ENCODE measurements at regions of chr19 and their contacts with region 1.

Region 1: DNA sequence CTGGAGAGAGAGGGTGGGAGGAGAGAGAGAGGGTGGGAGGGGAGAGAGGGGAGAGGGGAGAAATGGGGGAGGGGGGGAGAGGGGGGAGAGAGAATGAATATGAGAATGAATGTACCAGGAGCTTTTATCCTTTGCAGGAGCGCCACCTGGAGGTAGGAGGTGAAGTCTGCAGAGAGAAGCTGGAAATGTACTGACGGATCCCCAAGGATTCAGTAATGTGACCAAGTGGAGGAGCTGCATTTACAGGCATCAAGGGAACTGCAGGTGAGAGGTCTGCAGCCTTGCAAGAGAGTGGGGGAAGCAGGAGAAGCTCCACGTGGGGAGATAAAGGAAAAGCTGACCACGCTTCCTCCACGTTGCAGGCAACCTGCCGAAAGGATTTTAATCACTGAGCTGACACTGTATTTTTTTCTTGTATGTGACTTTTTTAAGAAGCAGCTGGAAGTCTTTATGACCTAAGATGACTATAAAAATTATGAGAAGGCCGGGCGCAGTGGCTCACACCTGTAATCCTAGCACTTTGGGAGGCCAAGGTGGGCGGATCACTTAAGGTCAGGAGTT is 33.7 kb downstream of the VSTM1 start:
- DNase-seq: no peak
- H3K4me3 ChIP-seq: no peak overlapping the region
- H3K27ac ChIP-seq: no peak overlapping the region
- H3K27me3 ChIP-seq: peaks cover 2% of the 10 kb centered on the region
- CTCF ChIP-seq: peak; percentile 69

Region 2: DNA sequence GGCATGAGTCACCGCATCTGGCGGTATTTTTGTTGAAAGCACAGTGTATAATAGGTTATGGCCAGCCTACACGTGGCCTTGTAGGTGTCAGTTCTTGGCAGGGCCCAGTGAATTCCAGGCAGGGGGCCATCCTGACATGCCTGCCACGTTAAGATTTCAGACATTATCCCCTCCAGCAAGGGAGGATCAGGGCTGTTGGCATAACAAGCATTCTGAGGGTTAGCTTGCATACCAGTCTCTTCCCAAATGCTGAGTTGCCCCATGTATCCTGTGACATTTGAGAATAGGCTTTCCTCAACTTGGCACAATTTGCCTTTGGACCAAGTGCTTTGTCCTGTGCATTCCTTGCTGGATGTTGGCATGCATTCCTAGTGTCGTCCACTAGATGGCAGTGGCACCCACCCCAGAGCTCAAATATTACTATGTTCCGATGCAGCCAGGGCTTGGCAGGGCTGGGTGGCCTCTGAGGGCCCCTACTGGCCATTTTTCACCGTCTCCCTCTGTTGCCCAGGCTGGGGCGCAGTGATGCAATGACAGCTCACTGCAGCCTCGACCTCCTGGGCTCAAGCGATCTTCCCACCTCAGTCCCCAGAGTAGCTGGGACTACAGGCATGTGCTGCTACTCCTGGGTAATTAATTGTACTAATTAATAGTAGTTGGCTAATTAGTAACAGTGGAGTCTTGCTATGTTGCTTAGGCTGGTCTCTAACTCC is 237.1 kb before region 1 on chr19:
- CTCF ChIA-PET with region 1: interaction called, 97 read pairs
- POLR2A ChIA-PET with region 1: no interaction called
- DNase-seq: peak; percentile 61
- H3K4me3 ChIP-seq: no peak overlapping the region
- H3K27ac ChIP-seq: no peak overlapping the region
- H3K27me3 ChIP-seq: no peaks in the 10 kb centered on the region
- CTCF ChIP-seq: peak; percentile 99

Region 3: GRCh38 chr19:53826876-53827275 is 203.1 kb before region 1 on chr19:
- CTCF ChIA-PET with region 1: interaction called, 11 read pairs
- POLR2A ChIA-PET with region 1: no interaction called
- DNase-seq: no peak
- H3K4me3 ChIP-seq: no peak overlapping the region
- H3K27ac ChIP-seq: no peak overlapping the region
- H3K27me3 ChIP-seq: peaks cover 9% of the 10 kb centered on the region
- CTCF ChIP-seq: no peak

Region 4: GRCh38 chr19:53867225-53868090 is 162.6 kb before region 1 on chr19 and contains the start of gene MYADM:
- CTCF ChIA-PET with region 1: interaction called, 11 read pairs
- POLR2A ChIA-PET with region 1: interaction called, 3 read pairs
- DNase-seq: peak; percentile 96
- H3K4me3 ChIP-seq: peak within 1 kb of the TSS; percentile 93
- H3K27ac ChIP-seq: peak within 1 kb of the TSS; percentile 97
- H3K27me3 ChIP-seq: no peaks in the 10 kb centered on the region
- CTCF ChIP-seq: no peak
- polyA plus RNA-seq, gene MYADM: 39.3 and 71.0 TPM in 2 replicates

Region 5: GRCh38 chr19:54041969-54042606 is 12.1 kb after region 1 on chr19:
- CTCF ChIA-PET with region 1: interaction called, 28 read pairs
- POLR2A ChIA-PET with region 1: no interaction called
- DNase-seq: no peak
- H3K4me3 ChIP-seq: no peak overlapping the region
- H3K27ac ChIP-seq: no peak overlapping the region
- H3K27me3 ChIP-seq: peaks cover 4% of the 10 kb centered on the region
- CTCF ChIP-seq: no peak

Measured in AG04450 (cell line).